Mammary epithelial cell (primary cell): ENCODE measurements at regions of chr20 and their contacts with region 1.

Region 1: DNA sequence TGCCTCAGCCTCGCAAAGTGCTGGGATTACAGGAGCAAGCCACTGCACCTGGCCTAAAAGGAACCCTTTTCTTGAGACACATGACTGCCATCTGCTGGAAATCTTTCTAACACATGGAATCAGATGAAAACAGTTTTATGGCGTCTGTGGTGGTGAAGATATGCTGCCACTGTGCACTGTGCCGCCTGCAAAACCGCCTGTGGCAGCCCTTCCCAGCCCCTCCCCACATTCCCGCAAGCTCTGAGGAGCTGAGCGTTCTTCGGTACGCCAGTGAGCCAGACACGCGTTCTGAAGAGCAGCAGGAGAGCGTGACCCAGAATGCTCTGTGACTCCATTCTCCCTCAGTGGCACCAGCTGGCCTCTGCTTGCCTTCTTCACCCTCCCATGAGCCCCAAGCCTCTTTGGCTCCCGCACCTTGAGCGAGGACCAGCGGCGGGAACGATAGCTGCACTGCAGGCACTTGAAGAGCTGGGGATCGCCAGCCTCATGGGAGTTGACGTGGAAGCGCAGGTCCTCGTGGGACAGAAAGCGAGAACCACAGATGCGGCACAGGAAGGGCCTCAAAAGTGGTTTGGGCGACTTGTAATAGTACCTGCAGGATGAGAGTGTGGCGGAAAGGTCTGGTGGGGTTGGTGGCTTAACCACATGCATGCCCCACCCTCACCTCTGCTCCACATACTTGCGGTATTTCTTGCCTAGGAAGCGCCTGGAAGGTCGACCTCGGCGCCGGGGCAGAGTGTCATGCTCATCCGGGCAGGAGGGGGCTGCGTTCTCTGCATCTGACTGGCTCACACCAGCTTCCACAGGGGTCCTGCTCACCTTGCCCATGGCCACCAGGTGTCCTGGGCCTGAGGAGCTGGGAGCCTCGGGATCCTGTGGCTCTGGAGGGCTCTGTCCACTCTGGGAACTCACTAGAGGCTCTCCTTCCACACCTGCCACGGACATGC is 8.7 kb downstream of the ZNF335 start:
- DNase-seq: no peak
- H3K4me3 ChIP-seq: no peak overlapping the region
- H3K27ac ChIP-seq: no peak overlapping the region
- H3K4me1 ChIP-seq: no peaks in the 10 kb centered on the region
- H3K27me3 ChIP-seq: no peaks in the 10 kb centered on the region
- CTCF ChIP-seq: peak; percentile 39 to 45

Region 2: GRCh38 chr20:45545754-45546453 is 417.4 kb before region 1 on chr20:
- CTCF ChIA-PET with region 1: no interaction called
- dilution Hi-C with region 1: no loop called
- in situ Hi-C with region 1: no loop called
- intact Hi-C with region 1: loop called (anchors 5 kb)
- DNase-seq: peak; percentile 33
- H3K4me3 ChIP-seq: no peak overlapping the region
- H3K27ac ChIP-seq: no peak overlapping the region
- H3K4me1 ChIP-seq: no peaks in the 10 kb centered on the region
- H3K27me3 ChIP-seq: no peaks in the 10 kb centered on the region
- CTCF ChIP-seq: peak; percentile 17 to 46

Region 3: GRCh38 chr20:45798935-45799642 is 164.2 kb before region 1 on chr20:
- CTCF ChIA-PET with region 1: no interaction called
- dilution Hi-C with region 1: no loop called
- in situ Hi-C with region 1: no loop called
- intact Hi-C with region 1: loop called (anchors 1 kb)
- DNase-seq: peak; percentile 37
- H3K4me3 ChIP-seq: no peak overlapping the region
- H3K27ac ChIP-seq: no peak overlapping the region
- H3K4me1 ChIP-seq: no peaks in the 10 kb centered on the region
- H3K27me3 ChIP-seq: no peaks in the 10 kb centered on the region
- CTCF ChIP-seq: peak; percentile 76

Region 4: DNA sequence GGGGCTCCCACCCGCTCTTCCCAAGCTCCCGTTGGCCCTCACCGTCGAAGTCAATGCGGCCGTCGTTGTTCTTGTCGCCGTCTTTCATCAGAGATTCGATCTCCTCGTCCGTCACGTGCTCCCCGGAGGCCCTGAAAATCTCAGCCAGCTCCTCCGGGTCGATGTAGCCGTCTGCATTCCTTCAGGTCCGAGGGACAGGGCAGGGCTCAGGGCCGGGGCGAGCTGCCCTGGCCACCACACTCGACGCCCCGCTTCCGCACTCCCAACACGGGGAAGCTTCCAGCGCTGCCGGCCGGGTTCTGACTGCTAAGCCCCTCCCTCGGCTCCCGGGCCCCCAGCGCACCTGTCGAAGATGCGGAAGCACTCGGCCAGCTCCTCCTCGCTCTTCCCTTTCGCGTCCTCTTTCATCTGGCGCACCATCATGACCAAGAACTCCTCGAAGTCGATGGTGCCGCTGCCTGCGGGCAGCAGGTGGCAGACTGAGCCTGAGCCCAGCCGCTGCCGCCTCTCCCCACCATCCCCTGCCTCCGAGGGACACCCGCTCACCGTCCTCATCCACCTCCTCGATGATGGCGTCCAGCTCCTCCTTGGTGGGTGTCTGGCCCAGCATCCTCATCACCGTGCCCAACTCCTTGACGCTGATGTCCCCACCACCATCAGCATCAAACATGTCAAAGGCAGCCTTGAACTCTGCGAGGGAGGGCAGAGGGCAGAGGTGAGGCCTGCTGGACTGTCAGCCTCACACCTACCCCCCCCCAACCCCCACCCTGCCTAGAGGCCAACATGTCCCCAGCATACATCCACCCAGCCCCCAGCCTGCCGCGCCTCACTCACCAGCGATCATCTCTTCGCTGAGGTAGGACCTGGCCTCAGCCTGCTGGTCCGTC is 139.1 kb before region 1 on chr20:
- CTCF ChIA-PET with region 1: no interaction called
- dilution Hi-C with region 1: no loop called
- in situ Hi-C with region 1: loop called in 1 of 2 experiments (anchors 10 kb)
- intact Hi-C with region 1: loop called (anchors 1 kb)
- DNase-seq: peak; percentile 37
- H3K4me3 ChIP-seq: peak overlapping the region in 1 of 3 experiments; percentile 35
- H3K27ac ChIP-seq: no peak overlapping the region
- H3K4me1 ChIP-seq: peaks cover 12% of the 10 kb centered on the region
- H3K27me3 ChIP-seq: no peaks in the 10 kb centered on the region
- CTCF ChIP-seq: peak; percentile 41 to 61

Region 5: DNA sequence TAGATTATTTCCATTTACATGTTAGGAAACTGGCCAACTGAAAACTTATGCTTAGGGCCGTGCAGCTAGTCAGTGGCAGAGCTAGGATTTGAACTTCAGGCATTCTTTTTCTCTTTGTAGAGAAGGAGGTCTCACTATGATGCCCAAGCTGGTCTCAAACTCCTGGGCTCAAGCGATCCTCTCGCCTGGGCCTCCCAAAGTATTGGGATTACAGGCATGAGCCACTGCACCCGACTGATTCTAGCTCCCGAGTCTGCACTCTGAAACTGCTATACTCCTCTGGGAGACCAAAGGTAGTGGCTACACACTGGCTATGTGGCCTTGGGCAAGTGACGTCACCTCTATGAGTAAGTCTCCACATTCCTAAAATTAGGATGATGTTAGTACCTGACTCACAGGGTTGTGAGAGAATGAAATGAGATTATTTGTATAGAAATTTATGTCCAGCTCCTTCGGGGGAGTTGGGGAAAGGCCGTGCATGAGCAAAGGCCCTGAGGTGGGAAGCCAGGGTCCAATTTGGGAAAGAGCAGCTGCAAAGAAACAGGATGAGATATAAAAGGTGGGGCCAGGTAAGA is 57.7 kb before region 1 on chr20:
- CTCF ChIA-PET with region 1: no interaction called
- dilution Hi-C with region 1: no loop called
- in situ Hi-C with region 1: no loop called
- intact Hi-C with region 1: no loop called
- DNase-seq: peak; percentile 92
- H3K4me3 ChIP-seq: no peak overlapping the region
- H3K27ac ChIP-seq: no peak overlapping the region
- H3K4me1 ChIP-seq: peaks cover 14% of the 10 kb centered on the region
- H3K27me3 ChIP-seq: no peaks in the 10 kb centered on the region
- CTCF ChIP-seq: no peak